ENCODE measurements at regions of chr1 and their contacts with region 1.

Region 1: GRCh38 chr1:107936498-107937481 is 28.2 kb downstream of the VAV3 start:
- DNase-seq: peak; percentile 38
- H3K4me3 ChIP-seq: peak overlapping the region; percentile 5
- H3K27ac ChIP-seq: no peak overlapping the region
- H3K4me1 ChIP-seq: peaks cover 44% of the 10 kb centered on the region
- CTCF ChIP-seq: 0 out of 2 replicates have a peak, but pooled peaks have one; percentile 21

Region 2: DNA sequence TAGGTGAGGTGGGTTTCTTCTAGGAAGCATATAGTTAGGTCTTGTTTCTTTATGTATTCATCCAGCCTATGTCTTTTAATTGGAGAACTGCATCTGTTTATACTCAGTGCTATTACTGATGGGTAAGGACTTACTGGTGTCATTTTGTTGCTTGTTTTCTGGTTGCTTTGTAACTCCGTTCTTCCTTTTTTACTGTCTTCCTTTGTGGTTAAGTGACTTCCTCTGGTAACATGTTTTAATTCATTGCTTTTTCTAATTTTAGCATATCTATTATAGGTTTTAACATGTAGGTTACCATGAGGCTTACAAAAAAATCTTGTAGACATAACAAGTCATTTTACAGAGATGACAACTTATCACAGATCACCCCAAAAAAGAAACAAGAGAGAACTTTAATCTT is 132.7 kb before region 1 on chr1:
- CTCF ChIA-PET with region 1: no interaction called
- POLR2A ChIA-PET with region 1: no interaction called
- intact Hi-C with region 1: loop called (anchors 5 kb)
- DNase-seq: peak; percentile 64
- H3K4me3 ChIP-seq: peak overlapping the region; percentile 46
- H3K27ac ChIP-seq: peak overlapping the region; percentile 52
- H3K4me1 ChIP-seq: peaks cover 41% of the 10 kb centered on the region
- CTCF ChIP-seq: no peak

Region 3: DNA sequence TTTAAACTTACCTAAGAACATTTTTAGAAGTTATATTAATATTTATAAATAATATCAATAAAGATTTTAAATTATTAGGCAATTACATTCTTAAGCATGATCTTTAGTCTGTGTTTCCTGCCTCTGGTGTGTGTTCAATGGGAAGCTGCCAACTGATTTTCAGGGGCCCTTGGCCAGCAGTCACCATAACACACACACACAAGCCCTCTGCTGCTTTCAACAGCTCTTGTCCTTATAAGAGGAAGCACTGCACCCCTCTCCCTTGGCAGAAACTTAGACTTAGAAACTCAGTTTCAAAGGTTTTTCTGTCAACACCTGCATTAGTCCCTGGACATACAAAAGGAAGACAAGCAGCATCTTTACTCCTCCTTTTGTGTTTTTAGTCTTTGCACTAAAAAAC is 53.2 kb before region 1 on chr1:
- CTCF ChIA-PET with region 1: no interaction called
- POLR2A ChIA-PET with region 1: interaction called, 6 read pairs
- intact Hi-C with region 1: loop called (anchors 5 kb)
- DNase-seq: no peak
- H3K4me3 ChIP-seq: no peak overlapping the region
- H3K27ac ChIP-seq: no peak overlapping the region
- H3K4me1 ChIP-seq: no peaks in the 10 kb centered on the region
- CTCF ChIP-seq: no peak

Region 4: DNA sequence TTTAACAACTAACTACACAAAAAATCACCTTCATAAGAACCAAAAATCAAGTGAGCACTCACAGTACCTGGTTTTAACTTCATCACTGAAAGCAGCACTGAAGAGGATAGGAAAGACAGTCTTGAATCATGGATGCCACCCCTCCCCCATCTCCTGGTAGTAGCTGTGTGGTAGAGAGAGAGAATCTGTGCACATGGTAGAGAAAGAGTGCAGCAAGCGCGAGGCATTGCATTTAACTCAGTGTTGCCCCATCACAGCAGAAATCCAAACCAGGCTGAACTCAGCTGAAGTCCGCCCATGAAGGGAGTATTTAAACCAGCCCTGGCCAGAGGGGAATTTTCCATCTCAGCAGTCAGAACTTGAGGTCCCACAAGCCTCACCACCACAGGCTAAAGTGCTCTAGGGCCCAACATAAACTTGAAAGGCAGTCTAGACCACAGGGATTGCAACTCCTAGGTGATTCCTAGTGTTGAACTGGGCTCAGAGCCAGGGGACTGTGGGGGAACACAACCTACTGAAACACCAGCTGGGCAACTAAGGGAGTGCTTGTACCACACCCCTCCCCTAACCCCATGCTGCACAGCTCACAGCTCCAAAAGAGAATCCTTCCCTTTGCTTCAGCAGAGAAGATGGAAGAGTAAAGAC is 10.2 kb before region 1 on chr1:
- CTCF ChIA-PET with region 1: interaction called, 3 read pairs
- POLR2A ChIA-PET with region 1: interaction called, 11 read pairs
- intact Hi-C with region 1: no loop called
- DNase-seq: no peak
- H3K4me3 ChIP-seq: no peak overlapping the region
- H3K27ac ChIP-seq: no peak overlapping the region
- H3K4me1 ChIP-seq: no peaks in the 10 kb centered on the region
- CTCF ChIP-seq: no peak

Region 5: DNA sequence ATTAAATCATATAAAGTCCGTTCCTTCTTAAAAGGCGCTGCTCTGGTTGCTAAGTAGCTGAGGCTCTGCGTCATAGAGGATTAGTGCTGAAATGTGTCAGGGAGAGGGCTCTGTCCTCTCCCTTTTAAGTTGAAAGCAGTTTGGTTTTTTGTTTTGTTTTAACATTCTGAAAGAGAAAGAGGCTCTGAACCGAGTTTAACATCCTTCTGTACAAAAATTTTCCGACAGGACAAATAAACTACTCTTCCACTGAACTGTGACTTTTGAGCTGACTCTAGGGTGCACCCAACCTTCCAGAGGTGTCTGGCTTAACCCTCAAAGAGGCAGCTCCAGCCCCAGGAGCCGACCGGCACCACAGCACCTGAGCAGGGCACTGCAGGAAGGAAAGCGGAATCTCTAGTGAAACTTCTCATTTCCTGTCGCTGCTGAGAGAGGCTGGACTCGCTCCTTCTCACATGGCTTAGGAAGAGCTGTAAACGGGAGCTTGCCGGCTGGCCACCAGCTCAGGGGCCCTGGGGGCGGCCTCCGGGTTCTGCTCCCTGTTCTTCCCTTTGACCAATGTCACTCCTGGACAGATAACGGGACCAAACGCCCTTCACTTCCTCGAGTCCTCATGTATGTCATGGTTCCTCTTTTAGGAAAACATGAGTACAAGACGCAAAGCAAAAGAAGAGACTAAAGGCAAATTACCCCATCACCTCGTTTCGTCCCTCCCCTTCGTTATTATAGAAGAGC is 27.0 kb after region 1 on chr1:
- CTCF ChIA-PET with region 1: no interaction called
- POLR2A ChIA-PET with region 1: interaction called, 4 read pairs
- intact Hi-C with region 1: loop called (anchors 1 kb)
- DNase-seq: peak; percentile 70
- H3K4me3 ChIP-seq: peak overlapping the region; percentile 73
- H3K27ac ChIP-seq: peak overlapping the region; percentile 25
- H3K4me1 ChIP-seq: peaks cover 11% of the 10 kb centered on the region
- CTCF ChIP-seq: no peak

Region 6: GRCh38 chr1:108118018-108118902 is 181.5 kb after region 1 on chr1:
- CTCF ChIA-PET with region 1: no interaction called
- POLR2A ChIA-PET with region 1: no interaction called
- intact Hi-C with region 1: no loop called
- DNase-seq: no peak
- H3K4me3 ChIP-seq: no peak overlapping the region
- H3K27ac ChIP-seq: no peak overlapping the region
- H3K4me1 ChIP-seq: peaks cover 7% of the 10 kb centered on the region
- CTCF ChIP-seq: no peak